Activated CD4-positive, alpha-beta memory T cell treated with anti-CD3 and anti-CD28 coated beads for 36 hours (primary cell): ENCODE measurements at regions of chr2 and their contacts with region 1.

Region 1: GRCh38 chr2:172102391-172103278 is at the start of gene DLX2:
- DNase-seq: peak; percentile 81
- H3K4me3 Mint-ChIP-seq: peak within 1 kb of the TSS; percentile 71
- H3K27ac Mint-ChIP-seq: no peak within 1 kb of the TSS
- H3K4me1 Mint-ChIP-seq: peaks cover 50% of the 10 kb centered on the region
- H3K27me3 Mint-ChIP-seq: peaks cover 70% of the 10 kb centered on the region
- total RNA-seq, gene DLX2: not detected

Region 2: GRCh38 chr2:171598713-171599319 is 503.8 kb before region 1 on chr2:
- CTCF ChIA-PET with region 1: interaction called, 8 read pairs
- POLR2A ChIA-PET with region 1: no interaction called
- intact Hi-C with region 1: loop called (anchors 1 kb)
- DNase-seq: peak; percentile 47
- H3K4me3 Mint-ChIP-seq: no peak overlapping the region
- H3K27ac Mint-ChIP-seq: no peak overlapping the region
- H3K4me1 Mint-ChIP-seq: peaks cover 2% of the 10 kb centered on the region
- H3K27me3 Mint-ChIP-seq: peaks cover 4% of the 10 kb centered on the region

Region 3: DNA sequence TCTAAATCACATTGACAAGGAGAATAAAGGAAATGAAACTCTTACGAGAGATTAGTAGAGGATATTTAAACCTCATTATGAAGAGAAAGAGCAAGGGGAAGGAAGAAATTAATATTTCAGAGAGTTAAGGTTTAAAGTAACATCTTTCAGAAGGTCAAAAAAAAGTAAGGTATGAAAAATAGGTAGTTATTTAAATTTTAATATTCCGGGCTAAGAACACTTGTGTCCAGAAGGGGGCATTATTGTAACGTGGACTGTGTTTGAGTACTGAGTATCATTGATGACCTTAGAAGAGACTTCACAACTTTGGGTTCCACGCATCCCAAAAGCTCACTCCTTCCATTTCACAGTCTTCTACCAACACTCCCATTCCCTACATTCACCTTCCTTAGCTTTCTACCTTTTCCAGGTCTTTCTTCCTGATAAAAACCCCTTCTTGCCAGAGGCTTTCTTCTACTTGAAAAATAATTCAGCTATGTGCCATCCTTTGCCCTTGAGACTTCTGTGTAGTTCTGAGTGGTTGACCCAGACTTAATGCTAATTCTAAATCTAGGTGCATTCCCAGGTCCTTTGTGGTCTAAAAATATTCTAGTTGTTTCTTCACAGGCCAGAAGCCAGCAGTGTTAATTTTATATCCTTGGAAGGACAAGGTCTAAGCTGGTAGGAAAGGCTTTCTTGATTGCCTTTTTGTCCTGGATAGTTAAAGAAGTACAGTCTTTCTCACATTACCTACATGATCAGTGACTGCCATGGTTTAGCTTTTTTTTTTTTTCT is 398.9 kb before region 1 on chr2:
- CTCF ChIA-PET with region 1: interaction called, 116 read pairs
- POLR2A ChIA-PET with region 1: no interaction called
- intact Hi-C with region 1: loop called (anchors 1 kb)
- DNase-seq: no peak
- H3K4me3 Mint-ChIP-seq: no peak overlapping the region
- H3K27ac Mint-ChIP-seq: no peak overlapping the region
- H3K4me1 Mint-ChIP-seq: peaks cover 7% of the 10 kb centered on the region
- H3K27me3 Mint-ChIP-seq: no peaks in the 10 kb centered on the region

Region 4: GRCh38 chr2:171922230-171923022 is 180.2 kb before region 1 on chr2 and contains the start of gene HAT1:
- CTCF ChIA-PET with region 1: interaction called, 3 read pairs
- POLR2A ChIA-PET with region 1: no interaction called
- intact Hi-C with region 1: loop called (anchors 5 kb)
- DNase-seq: peak; percentile 99
- H3K4me3 Mint-ChIP-seq: peak within 1 kb of the TSS; percentile 97
- H3K27ac Mint-ChIP-seq: peak within 1 kb of the TSS; percentile 98
- H3K4me1 Mint-ChIP-seq: peaks cover 33% of the 10 kb centered on the region
- H3K27me3 Mint-ChIP-seq: no peaks in the 10 kb centered on the region
- total RNA-seq, gene HAT1: 86.2 to 90.8 TPM

Region 5: DNA sequence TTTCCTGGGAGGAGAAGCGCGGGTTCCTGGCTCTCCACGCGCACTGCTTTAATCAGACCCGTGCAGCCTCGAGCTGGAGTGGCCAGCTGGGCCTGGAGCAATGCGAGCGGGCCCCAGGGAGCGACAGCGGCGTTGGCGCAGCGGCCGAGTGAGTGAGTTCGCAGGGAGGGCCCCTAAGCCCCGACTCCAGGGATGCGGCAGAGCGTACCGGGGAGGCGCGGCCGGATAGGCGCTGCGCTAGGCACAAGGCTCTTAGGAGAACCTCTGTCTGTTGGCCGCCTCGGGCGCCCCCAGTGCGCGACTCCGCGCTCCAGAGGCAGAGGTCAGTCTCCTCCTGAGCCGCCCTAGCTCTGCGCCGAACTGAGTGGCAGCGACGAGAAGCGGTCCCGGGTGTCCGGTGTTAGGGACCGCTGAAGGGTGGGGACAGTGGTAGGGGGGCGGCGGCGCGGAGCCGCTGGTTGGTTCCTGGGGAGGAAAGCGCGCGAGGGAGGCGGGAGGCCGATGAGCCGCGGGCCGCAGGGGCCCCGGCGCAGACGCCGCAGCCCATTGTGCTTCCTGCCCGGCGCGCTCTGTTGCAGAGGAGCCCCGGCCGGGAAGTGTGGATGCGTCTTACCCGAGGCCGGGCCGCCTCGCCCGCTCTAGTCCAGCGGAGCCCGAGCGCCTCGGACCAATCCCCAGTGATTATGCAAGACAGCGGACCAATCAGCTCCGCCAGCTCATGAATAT is 17.7 kb before region 1 on chr2:
- CTCF ChIA-PET with region 1: interaction called, 88 read pairs
- POLR2A ChIA-PET with region 1: interaction called, 8 read pairs
- intact Hi-C with region 1: loop called (anchors 1 kb)
- DNase-seq: peak; percentile 78
- H3K4me3 Mint-ChIP-seq: peak overlapping the region; percentile 75
- H3K27ac Mint-ChIP-seq: no peak overlapping the region
- H3K4me1 Mint-ChIP-seq: peaks cover 57% of the 10 kb centered on the region
- H3K27me3 Mint-ChIP-seq: peaks cover 93% of the 10 kb centered on the region

Region 6: DNA sequence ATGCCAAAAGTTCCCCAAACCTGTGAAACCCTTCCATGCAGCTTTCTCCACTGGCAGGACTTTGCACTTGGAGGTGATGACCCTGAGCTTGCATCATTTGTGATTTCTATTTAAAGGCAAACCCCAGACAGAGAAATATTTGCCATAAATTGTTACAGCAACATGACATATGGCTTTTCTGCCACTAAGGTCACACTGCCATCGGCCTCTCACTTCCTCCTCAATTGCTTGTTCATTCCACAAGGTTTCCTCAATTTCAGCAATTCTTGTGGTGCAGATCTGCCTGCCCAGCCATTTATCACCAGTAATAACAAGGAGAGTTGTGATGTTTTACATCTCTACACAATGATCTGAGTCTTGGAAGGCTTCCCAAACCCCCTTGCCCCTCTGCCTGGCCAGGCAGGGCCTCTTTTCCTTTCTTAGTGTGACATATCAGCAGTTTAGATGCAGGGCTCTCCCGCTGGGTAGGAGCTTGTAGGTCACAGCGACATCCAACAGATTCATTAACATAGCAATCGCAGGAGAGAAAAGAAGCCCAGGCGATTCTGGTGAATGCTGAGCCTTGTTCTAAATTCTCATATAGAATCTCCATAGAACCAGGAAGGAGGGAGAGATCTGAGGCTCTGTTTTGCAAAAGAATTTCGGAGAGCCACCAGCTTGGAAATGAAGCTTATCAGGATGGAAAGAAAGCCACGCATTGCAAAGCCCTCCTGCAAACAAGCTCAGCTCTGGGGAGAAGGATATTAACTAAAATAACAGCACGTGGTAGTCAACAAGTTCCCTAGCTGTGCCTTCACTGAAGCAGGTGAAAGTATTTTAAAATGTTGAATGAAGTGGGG is 278.0 kb after region 1 on chr2:
- CTCF ChIA-PET with region 1: no interaction called
- POLR2A ChIA-PET with region 1: no interaction called
- intact Hi-C with region 1: no loop called
- DNase-seq: no peak
- H3K4me3 Mint-ChIP-seq: no peak overlapping the region
- H3K27ac Mint-ChIP-seq: no peak overlapping the region
- H3K4me1 Mint-ChIP-seq: no peaks in the 10 kb centered on the region
- H3K27me3 Mint-ChIP-seq: no peaks in the 10 kb centered on the region

Region 7: DNA sequence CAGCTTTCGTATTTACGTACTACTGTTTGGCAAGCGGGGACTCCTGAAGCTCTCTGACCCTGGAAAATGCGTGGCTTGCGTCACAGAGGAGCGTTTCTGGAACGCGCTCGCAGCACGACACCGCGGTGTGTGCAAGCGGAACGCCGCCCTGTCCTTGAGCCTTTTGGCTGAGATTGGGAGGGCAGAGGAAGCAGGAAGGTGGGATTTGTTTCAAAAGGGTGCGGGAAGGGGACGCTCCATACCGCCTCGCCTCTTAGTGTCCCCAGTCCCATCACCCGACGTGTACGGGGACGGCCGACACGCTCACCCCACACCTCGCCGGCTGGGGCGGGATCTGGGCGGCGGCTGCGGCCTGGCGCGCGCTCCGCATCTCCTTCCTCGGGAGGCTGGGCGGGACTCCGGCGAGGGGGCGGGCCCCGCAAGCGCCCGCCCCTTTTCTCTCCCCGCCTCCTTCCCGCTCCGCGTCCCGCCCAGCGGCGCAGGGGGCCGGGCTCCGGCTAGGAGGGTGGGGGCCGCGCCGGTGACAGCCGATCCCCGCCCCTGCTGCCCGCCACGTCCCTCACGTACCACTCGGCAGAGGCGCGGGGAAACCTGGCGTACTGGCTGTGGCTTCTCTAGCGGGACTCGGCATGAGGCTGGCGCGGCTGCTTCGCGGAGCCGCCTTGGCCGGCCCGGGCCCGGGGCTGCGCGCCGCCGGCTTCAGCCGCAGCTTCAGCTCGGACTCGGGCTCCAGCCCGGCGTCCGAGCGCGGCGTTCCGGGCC is 453.1 kb after region 1 on chr2 and contains the start of gene PDK1:
- CTCF ChIA-PET with region 1: no interaction called
- POLR2A ChIA-PET with region 1: no interaction called
- intact Hi-C with region 1: loop called (anchors 5 kb)
- DNase-seq: peak; percentile 93
- H3K4me3 Mint-ChIP-seq: peak within 1 kb of the TSS; percentile 90
- H3K27ac Mint-ChIP-seq: peak within 1 kb of the TSS; percentile 90
- H3K4me1 Mint-ChIP-seq: peaks cover 45% of the 10 kb centered on the region
- H3K27me3 Mint-ChIP-seq: peaks cover 6% of the 10 kb centered on the region
- total RNA-seq, gene PDK1: 24.7 to 31.6 TPM